ENCODE measurements at regions of chr12 and their contacts with region 1.

Region 1: GRCh38 chr12:109477185-109477962 is at the starts of genes KCTD10 and UBE3B:
- DNase-seq: peak; percentile 37 to 93
- H3K4me3 ChIP-seq: peak within 1 kb of the TSS; percentile 75 to 96
- H3K27ac ChIP-seq: peak within 1 kb of the TSS; percentile 94 to 97
- H3K4me1 ChIP-seq: peaks cover 7 to 39% of the 10 kb centered on the region in 2 donors
- H3K27me3 ChIP-seq: no peaks in the 10 kb centered on the region
- CTCF ChIP-seq: no peak
- total RNA-seq, gene KCTD10: 102 TPM
- total RNA-seq, gene UBE3B: 19.1 TPM

Region 2: DNA sequence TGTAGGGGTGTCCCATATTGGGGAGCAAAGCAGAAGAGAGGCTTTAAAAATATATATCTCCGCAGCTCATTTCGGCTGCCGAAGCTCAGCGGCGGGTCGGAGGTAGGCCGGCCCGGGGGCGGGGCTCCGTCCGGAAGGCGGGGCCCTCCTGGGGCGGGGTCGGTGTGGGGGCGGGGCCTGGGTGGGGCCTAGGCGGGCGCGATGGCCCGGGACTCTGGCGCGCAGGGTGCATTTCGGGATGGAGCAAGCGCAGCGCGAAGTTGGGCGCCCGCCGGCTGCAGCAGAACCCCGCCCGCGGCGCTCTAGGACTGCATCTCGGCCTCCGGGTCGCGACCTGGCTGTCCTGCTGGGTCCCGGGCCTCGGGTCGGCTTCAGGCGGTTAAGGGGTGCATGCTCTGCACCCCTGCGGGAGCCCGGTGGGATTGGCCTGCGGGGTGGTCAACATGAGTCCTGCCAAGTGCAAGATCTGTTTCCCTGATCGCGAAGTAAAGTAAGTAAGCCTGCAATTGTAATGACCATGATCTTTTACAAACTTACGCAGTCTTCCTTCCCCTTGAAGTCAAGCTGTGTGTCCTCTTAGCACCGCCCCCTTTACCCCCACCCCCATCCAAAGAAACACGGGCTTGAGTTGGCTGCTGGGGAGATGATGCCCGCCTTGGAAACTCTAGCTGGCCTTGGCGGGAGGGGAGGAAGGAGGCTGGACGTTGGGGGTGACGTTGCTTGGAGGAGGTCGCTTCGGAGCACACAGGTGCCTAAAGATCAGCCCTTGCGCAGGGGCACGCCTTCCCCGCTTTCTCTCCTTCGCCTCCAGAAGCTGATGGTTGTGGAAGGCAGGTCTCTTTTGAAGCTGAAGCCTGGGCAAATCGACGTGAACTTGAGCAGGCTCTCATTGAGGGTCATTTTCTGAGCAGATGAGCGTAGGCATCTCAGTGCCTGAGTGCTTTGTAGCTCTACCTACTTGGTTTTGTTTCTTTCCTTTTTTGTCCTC is 322.6 kb before region 1 on chr12:
- intact Hi-C with region 1: loop called (anchors 10 kb)
- DNase-seq: peak; percentile 63 to 90
- H3K4me3 ChIP-seq: peak overlapping the region; percentile 76 to 94
- H3K27ac ChIP-seq: peak overlapping the region; percentile 77 to 86
- H3K4me1 ChIP-seq: peaks cover 0 to 4% of the 10 kb centered on the region in 2 donors
- H3K27me3 ChIP-seq: no peaks in the 10 kb centered on the region
- CTCF ChIP-seq: peak in 1 of 3 experiments; percentile 4

Region 3: GRCh38 chr12:109428037-109428629 is 49.2 kb before region 1 on chr12:
- intact Hi-C with region 1: loop called (anchors 1 kb)
- DNase-seq: peak; percentile 31 to 91
- H3K4me3 ChIP-seq: no peak overlapping the region
- H3K27ac ChIP-seq: no peak overlapping the region
- H3K4me1 ChIP-seq: peaks cover 0 to 3% of the 10 kb centered on the region in 2 donors
- H3K27me3 ChIP-seq: no peaks in the 10 kb centered on the region
- CTCF ChIP-seq: peak; percentile 73 to 98 (median 98)

Region 4: GRCh38 chr12:109573029-109573913 is 95.9 kb after region 1 on chr12 and contains the starts of genes MMAB and MVK:
- intact Hi-C with region 1: loop called (anchors 10 kb)
- DNase-seq: peak; percentile 99 to 100
- H3K4me3 ChIP-seq: peak within 1 kb of the TSS; percentile 68 to 78
- H3K27ac ChIP-seq: peak within 1 kb of the TSS; percentile 64 to 78
- H3K4me1 ChIP-seq: peaks cover 0 to 12% of the 10 kb centered on the region in 2 donors
- H3K27me3 ChIP-seq: no peaks in the 10 kb centered on the region
- CTCF ChIP-seq: no peak
- total RNA-seq, gene MMAB: 43.5 TPM
- total RNA-seq, gene MVK: 53.1 TPM

Region 5: DNA sequence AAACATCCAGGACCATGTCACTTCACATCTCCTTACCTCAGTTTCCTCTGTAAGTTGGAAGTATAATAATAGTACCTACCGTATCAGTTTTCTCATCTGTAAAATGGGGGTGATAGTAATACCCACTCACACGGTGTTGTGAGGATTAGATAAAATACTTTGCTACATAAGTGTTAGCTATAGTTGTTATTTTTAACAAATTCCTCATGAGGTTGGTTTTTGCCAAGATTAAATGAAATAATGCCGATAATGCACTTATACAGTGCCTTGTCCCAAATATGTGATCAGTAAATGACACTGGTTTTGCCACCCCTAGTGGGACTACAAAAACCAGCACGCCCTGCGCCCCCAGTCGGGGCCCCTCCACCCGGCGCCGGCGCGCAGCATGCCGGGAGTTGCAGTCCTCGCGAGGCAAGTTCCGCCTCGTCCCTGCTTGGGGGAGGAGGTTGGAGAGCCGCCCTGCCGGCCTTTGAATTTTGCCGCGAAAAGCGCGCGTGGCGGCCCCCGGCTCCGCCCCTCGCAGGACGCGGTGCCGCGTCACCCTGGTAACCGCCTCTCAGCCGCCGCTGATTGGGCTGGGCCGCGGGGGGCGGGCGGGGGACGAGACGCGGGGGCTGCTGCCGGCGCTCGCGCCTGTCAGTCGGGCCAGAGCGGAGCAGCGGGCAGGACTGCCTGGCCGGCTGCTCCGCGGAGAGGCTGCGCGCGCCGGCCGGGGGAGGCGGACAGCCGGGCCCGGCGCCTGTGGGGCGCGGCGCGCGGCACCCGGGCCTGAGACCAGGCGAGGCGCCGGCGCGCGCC is 236.0 kb after region 1 on chr12 and contains the start of gene FAM222A:
- intact Hi-C with region 1: loop called (anchors 10 kb)
- DNase-seq: peak; percentile 85 to 98
- H3K4me3 ChIP-seq: peak within 1 kb of the TSS; percentile 65 to 94
- H3K27ac ChIP-seq: no peak within 1 kb of the TSS
- H3K4me1 ChIP-seq: peaks cover 0 to 6% of the 10 kb centered on the region in 2 donors
- H3K27me3 ChIP-seq: peaks cover 24% of the 10 kb centered on the region
- CTCF ChIP-seq: peak in 1 of 3 experiments; percentile 18
- total RNA-seq, gene FAM222A: 3.3 TPM